ENCODE measurements at regions of chr17 and their contacts with region 1.

Region 1: GRCh38 chr17:40358323-40359038 is 6.1 kb downstream of the GJD3 start:
- DNase-seq: peak; percentile 77 to 91 (median 86)
- ATAC-seq: peak; percentile 49 to 57
- H3K4me3 Mint-ChIP-seq: peak overlapping the region in 3 of 10 donors; percentile 44 to 48 (median 45)
- H3K27ac Mint-ChIP-seq: peak overlapping the region in 5 of 10 donors; percentile 15 to 47 (median 33)
- H3K4me1 Mint-ChIP-seq: peaks cover 12 to 31% (median 21%) of the 10 kb centered on the region in 4 donors
- H3K27me3 Mint-ChIP-seq: peaks cover 3 to 29% (median 10%) of the 10 kb centered on the region in 5 donors

Region 2: GRCh38 chr17:40303009-40303657 is 55.3 kb before region 1 on chr17:
- POLR2A ChIA-PET with region 1: interaction called, 62 read pairs
- DNase-seq: peak in 8 of 10 donors; percentile 46 to 78 (median 64)
- ATAC-seq: peak; percentile 44 to 55
- H3K4me3 Mint-ChIP-seq: peak overlapping the region in 2 of 10 donors; percentile 2 to 19
- H3K27ac Mint-ChIP-seq: peak overlapping the region in 6 of 10 donors; percentile 2 to 53 (median 12)
- H3K4me1 Mint-ChIP-seq: peaks cover 14 to 18% (median 17%) of the 10 kb centered on the region in 4 donors
- H3K27me3 Mint-ChIP-seq: no peaks in the 10 kb centered on the region

Region 3: GRCh38 chr17:40309031-40309948 is 49.2 kb before region 1 on chr17 and contains the start of gene RARA:
- POLR2A ChIA-PET with region 1: interaction called, 62 read pairs
- DNase-seq: peak in 4 of 10 donors; percentile 36 to 64 (median 42)
- ATAC-seq: peak; percentile 48 to 51
- H3K4me3 Mint-ChIP-seq: no peak within 1 kb of the TSS
- H3K27ac Mint-ChIP-seq: peak within 1 kb of the TSS in 4 of 10 donors; percentile 12 to 91 (median 76)
- H3K4me1 Mint-ChIP-seq: peaks cover 2 to 27% (median 5%) of the 10 kb centered on the region in 4 donors
- H3K27me3 Mint-ChIP-seq: no peaks in the 10 kb centered on the region
- polyA plus RNA-seq, gene RARA: 7.2 to 12.4 (median 9.0) TPM

Region 4: GRCh38 chr17:40317880-40318829 is 40.3 kb before region 1 on chr17:
- POLR2A ChIA-PET with region 1: interaction called, 14 read pairs
- DNase-seq: peak; percentile 85 to 94 (median 89)
- ATAC-seq: peak; percentile 53 to 64
- H3K4me3 Mint-ChIP-seq: peak overlapping the region; percentile 83 to 97 (median 96)
- H3K27ac Mint-ChIP-seq: peak overlapping the region; percentile 98 to 100 (median 100)
- H3K4me1 Mint-ChIP-seq: peaks cover 52 to 79% (median 65%) of the 10 kb centered on the region in 4 donors
- H3K27me3 Mint-ChIP-seq: peaks cover 0 to 6% (median 0%) of the 10 kb centered on the region in 5 donors

Region 5: DNA sequence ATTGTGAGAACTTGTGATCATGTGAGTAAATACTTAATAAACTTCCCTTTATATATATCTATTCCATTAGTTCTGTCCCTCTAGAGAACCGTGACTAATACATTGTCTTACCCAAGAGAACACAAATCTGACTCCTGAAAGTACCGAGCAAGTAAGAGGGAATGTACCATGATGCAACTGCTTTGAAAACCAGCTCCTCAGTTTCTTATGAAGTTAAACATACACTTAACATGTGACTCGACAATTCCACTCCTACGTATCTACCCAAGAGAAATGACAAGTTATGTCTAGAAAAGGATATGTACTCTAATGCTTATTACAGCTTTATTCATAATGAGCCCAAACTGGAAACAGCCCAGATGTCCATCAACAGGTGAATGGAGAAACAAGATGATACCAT is 14.8 kb after region 1 on chr17:
- POLR2A ChIA-PET with region 1: no interaction called
- DNase-seq: no peak
- ATAC-seq: no peak
- H3K4me3 Mint-ChIP-seq: no peak overlapping the region
- H3K27ac Mint-ChIP-seq: no peak overlapping the region
- H3K4me1 Mint-ChIP-seq: peaks cover 6 to 15% (median 10%) of the 10 kb centered on the region in 4 donors
- H3K27me3 Mint-ChIP-seq: peaks cover 0 to 7% (median 2%) of the 10 kb centered on the region in 5 donors